GM13977 (cell line): ENCODE measurements at regions of chr20 and their contacts with region 1.

Region 1: DNA sequence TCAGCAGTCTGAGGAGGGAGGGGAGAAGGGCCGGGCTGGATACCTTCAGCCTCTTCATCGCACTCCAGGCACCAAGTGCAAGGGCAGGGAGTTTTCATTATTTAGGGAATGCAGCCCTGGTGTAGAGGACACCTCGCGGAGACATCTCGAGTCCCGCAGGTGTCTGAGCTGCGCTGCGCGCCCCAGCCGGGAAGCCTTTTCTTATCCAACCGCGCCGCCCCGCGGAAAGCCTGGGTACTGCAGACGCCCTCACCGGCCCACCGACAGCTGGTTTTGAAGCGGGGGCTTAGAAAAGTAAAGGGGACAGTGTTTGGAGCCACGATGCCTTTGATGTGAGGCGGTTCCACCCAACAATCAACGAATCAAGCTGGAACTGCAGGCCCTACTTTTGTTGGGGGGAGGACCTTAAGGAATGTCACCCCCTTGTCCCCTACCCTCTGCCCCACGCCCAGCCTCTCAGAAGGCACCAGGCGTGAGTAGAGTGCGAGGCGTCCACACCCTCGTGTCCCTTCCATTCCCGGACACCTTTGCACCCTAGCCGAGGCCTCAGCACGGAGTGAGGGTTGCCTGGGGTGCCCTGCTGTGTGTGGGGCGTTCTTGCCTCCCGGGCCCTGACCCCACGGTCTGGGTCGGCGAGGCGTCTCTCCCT is 8.6 kb downstream of the NKX2-2 start:
- DNase-seq: peak; percentile 89
- CTCF ChIP-seq: peak; percentile 98

Region 2: DNA sequence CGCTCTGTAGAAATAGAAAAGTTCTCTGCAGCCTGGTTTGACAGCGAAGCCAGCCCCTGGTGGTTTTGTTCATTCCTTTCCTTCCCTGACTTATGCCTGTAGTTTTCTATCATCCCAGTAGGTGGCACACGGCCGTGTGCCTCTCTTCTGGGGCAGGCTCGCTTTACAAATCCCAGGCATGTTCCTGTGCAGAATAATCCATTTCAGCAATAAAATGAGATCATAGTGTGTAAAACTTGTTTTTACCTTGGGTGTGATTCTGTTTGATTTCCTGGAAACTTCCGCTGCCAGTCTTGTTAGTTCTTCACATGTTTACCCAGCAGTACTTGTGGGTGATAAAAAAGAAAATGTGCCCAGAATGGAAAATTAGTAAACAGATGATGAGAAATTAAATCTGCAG is 1144.8 kb before region 1 on chr20:
- in situ Hi-C with region 1: loop called (anchors 25 kb)
- DNase-seq: peak; percentile 73
- CTCF ChIP-seq: peak; percentile 78

Region 3: GRCh38 chr20:20849161-20849560 is 656.1 kb before region 1 on chr20:
- in situ Hi-C with region 1: no loop called
- DNase-seq: no peak
- CTCF ChIP-seq: no peak

Region 4: GRCh38 chr20:20860078-20860806 is 645.0 kb before region 1 on chr20:
- in situ Hi-C with region 1: loop called (anchors 10 kb)
- DNase-seq: peak; percentile 75
- CTCF ChIP-seq: peak; percentile 94

Region 5: DNA sequence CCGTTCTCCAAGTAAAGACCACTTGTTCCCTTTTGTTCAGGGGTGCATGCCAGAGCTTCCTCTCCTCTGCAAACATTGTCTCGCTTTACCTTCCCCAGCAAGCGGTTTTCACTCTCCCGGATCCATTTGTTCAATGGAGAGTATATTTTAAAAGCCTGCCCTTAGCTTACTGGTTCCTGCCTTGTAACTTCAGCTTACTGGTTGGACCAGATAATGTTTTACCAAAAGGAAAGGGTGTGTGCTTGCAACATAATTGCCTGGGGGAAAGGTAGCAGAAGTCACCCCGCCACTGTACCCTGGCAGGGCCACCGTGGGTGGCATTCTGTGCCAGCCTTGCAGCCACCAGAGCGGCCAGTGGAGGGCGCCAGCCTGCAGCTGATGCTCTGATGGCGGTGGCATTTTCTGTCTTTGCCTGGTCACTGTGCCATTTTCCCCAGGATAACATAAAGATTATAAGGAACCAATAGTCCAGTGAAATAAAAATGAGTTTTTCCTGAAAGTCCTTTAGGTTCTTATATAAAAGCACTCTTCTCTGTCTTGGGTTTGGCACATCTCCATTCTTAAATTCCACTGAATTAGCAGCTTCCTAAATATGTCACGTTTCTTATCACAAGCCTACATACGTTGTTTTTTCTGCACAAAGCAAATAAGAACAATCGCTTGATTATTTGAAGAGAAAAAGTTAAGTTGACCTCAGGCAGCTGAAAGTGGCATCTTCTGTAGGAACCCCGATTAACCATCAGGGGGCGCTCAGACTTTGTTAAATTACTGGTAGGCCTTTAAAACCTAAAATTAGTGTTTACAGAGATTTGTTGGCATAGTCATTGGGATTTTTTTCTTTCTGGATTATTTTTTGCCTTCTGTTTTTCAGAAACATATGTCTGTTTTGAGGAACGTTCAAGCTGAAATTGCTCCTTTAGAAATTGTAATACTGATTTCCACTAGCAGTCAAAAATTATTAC is 269.5 kb before region 1 on chr20:
- in situ Hi-C with region 1: loop called (anchors 5 kb)
- DNase-seq: peak; percentile 62
- CTCF ChIP-seq: peak; percentile 96

Region 6: DNA sequence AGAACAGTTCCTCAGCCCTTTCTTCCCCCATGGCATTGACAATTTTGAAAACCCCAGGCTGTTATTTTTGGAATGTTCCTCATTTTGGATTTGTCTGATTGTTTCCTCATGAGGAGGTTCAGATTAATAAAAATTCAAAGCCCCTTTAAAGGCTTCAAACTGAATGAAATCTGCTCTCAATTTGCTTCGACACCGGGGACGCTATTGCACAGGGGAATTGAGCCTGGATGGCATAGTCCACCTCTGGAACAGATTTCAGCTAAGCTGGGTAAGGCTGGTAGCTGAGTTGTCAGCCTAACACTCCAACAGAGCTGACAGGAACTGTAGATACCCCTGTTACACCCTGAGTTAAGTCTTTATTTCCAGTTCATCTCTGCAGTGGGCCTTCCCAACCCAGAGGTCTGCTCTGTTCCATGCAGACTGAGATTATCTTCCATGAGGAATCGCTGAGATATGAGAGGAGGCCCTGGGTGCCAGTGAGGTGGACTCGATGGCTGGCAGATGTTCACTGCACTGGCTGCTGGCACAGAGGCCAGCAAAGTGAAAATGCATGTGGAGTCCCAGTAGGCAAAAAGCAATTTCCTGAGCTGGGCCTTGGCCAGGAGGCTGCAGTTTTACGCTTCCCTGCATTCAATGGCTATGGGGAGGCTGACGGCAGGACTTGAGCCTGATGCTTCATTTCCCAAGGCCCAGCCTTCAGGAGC is 126.9 kb after region 1 on chr20:
- in situ Hi-C with region 1: no loop called
- DNase-seq: no peak
- CTCF ChIP-seq: no peak